Heart left ventricle (tissue), 16 donors: ENCODE measurements at regions of chr2 and their contacts with region 1.

Region 1: GRCh38 chr2:134774786-134775641 is 56.2 kb upstream of the TMEM163 start:
- DNase-seq: peak in 1 of 5 donors; percentile 36
- ATAC-seq: peak in 3 of 4 donors; percentile 50 to 67 (median 51)
- H3K4me3 ChIP-seq: no peak overlapping the region
- H3K27ac ChIP-seq: peak overlapping the region in 5 of 12 donors; percentile 19 to 73 (median 25)
- H3K4me1 ChIP-seq: peaks cover 0 to 24% (median 19%) of the 10 kb centered on the region in 12 donors
- H3K27me3 ChIP-seq: no peaks in the 10 kb centered on the region
- CTCF ChIP-seq: no peak
- POLR2A ChIP-seq: no peak

Region 2: DNA sequence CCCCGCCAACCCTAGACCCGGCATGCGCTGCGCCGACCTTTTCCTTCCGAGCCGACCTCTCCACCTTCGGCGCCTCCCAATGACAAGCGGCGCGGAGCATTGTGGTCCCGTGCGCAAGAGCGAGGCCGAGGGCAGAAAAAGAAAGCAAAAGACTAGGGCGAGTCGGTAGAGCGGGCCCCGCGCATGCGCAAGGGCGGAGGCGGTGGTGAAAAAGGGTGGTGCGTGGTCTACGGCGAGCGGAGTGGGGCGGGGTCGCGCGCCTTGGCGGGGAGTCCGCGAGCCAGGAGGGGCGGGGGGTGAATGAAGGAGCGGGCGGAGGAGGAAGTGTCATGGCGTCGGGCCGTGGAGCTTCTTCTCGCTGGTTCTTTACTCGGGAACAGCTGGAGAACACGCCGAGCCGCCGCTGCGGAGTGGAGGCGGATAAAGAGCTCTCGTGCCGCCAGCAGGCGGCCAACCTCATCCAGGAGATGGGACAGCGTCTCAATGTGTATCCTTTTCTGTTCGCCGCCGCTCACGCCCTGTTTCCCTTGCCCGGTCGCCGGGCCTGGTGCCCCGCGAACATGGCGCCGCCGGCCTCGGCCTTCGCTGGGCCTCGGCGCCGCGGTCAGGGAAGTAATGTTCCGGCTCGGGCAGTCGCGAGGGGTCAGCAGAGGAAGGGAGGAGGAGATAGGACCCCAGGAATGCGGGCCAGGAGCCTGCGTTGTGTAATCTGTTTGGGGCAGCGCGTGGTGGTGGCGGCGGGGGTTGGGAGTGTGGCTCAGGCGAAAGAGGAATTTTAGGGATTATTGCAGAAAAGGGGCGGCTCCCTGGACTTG is 143.7 kb after region 1 on chr2 and contains the start of gene CCNT2:
- intact Hi-C with region 1: loop called in 1 of 10 experiments (anchors 5 kb)
- DNase-seq: peak; percentile 100
- ATAC-seq: peak; percentile 94 to 95 (median 95)
- H3K4me3 ChIP-seq: peak within 1 kb of the TSS; percentile 56 to 95 (median 89)
- H3K27ac ChIP-seq: peak within 1 kb of the TSS; percentile 83 to 99 (median 98)
- H3K4me1 ChIP-seq: peaks cover 8 to 51% (median 45%) of the 10 kb centered on the region in 12 donors
- H3K27me3 ChIP-seq: no peaks in the 10 kb centered on the region
- CTCF ChIP-seq: peak in 4 of 12 donors; percentile 6 to 28 (median 14)
- POLR2A ChIP-seq: no peak
- total RNA-seq, gene CCNT2: 11.9 to 26.8 (median 20.1) TPM